ENCODE measurements at regions of chr19 and their contacts with region 1.

Region 1: GRCh38 chr19:29694669-29695627 is 20.1 kb downstream of the C19orf12 start:
- DNase-seq: peak; percentile 91
- ATAC-seq: peak; percentile 96
- H3K4me3 Mint-ChIP-seq: no peak overlapping the region
- H3K27ac Mint-ChIP-seq: peak overlapping the region; percentile 21
- H3K4me1 Mint-ChIP-seq: peaks cover 7% of the 10 kb centered on the region
- H3K27me3 Mint-ChIP-seq: no peaks in the 10 kb centered on the region
- CTCF ChIP-seq: peak; percentile 96

Region 2: GRCh38 chr19:29587518-29587986 is 107.4 kb before region 1 on chr19:
- CTCF ChIA-PET with region 1: no interaction called
- POLR2A ChIA-PET with region 1: no interaction called
- intact Hi-C with region 1: no loop called
- DNase-seq: peak; percentile 85
- ATAC-seq: peak; percentile 99
- H3K4me3 Mint-ChIP-seq: no peak overlapping the region
- H3K27ac Mint-ChIP-seq: peak overlapping the region; percentile 55
- H3K4me1 Mint-ChIP-seq: peaks cover 29% of the 10 kb centered on the region
- H3K27me3 Mint-ChIP-seq: peaks cover 17% of the 10 kb centered on the region
- CTCF ChIP-seq: no peak

Region 3: GRCh38 chr19:29622138-29623070 is 72.5 kb before region 1 on chr19:
- CTCF ChIA-PET with region 1: interaction called, 16 read pairs
- POLR2A ChIA-PET with region 1: no interaction called
- intact Hi-C with region 1: no loop called
- DNase-seq: peak; percentile 64
- ATAC-seq: peak; percentile 57
- H3K4me3 Mint-ChIP-seq: peak overlapping the region; percentile 20
- H3K27ac Mint-ChIP-seq: peak overlapping the region; percentile 83
- H3K4me1 Mint-ChIP-seq: peaks cover 51% of the 10 kb centered on the region
- H3K27me3 Mint-ChIP-seq: no peaks in the 10 kb centered on the region
- CTCF ChIP-seq: no peak

Region 4: GRCh38 chr19:29665215-29665825 is 29.6 kb before region 1 on chr19 and contains the start of gene PLEKHF1:
- CTCF ChIA-PET with region 1: interaction called, 26 read pairs
- POLR2A ChIA-PET with region 1: interaction called, 4 read pairs
- intact Hi-C with region 1: no loop called
- DNase-seq: peak; percentile 87
- ATAC-seq: peak; percentile 79
- H3K4me3 Mint-ChIP-seq: peak within 1 kb of the TSS; percentile 88
- H3K27ac Mint-ChIP-seq: peak within 1 kb of the TSS; percentile 90
- H3K4me1 Mint-ChIP-seq: peaks cover 66% of the 10 kb centered on the region
- H3K27me3 Mint-ChIP-seq: no peaks in the 10 kb centered on the region
- CTCF ChIP-seq: no peak
- total RNA-seq, gene PLEKHF1: 30.4 to 31.7 TPM

Region 5: DNA sequence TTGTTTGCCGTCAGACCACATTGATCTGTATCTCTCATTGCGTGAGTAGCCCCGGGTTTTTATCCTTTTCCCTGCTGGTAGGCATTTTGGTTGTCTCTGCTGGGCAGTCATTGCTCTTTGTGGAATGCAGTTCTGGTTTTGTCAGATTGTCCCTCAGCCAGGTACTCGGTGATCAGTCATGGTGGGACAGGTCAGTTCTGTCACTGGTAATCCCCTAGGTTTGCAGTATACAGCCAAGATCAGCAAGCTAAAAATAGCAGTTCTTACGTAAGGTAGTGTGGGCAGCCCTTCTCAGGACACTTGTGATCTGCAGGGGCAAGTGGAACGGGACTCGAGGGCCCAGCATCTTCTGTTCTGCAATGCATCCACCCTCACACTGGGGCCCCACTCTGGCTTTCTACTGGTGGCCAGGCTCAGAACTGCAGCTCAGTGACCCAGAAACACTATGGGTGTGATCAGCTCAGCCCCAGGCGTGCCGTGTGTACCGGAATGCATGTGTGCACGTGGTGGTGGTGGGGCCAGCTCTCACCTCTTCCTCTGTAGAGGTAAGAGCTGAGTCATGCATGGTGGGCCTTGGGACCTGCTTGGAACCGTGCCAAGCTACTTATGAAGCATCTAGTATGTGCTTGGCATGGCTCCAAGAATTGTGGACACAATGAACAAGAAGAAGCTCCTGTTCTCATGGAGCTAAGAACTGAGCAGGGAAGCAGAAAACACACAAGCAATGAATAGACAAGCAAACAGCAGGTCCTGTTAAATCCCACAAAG is 23.4 kb before region 1 on chr19:
- CTCF ChIA-PET with region 1: interaction called, 26 read pairs
- POLR2A ChIA-PET with region 1: interaction called, 5 read pairs
- intact Hi-C with region 1: no loop called
- DNase-seq: peak; percentile 96
- ATAC-seq: peak; percentile 66
- H3K4me3 Mint-ChIP-seq: peak overlapping the region; percentile 52
- H3K27ac Mint-ChIP-seq: peak overlapping the region; percentile 90
- H3K4me1 Mint-ChIP-seq: peaks cover 89% of the 10 kb centered on the region
- H3K27me3 Mint-ChIP-seq: no peaks in the 10 kb centered on the region
- CTCF ChIP-seq: peak; percentile 77

Region 6: DNA sequence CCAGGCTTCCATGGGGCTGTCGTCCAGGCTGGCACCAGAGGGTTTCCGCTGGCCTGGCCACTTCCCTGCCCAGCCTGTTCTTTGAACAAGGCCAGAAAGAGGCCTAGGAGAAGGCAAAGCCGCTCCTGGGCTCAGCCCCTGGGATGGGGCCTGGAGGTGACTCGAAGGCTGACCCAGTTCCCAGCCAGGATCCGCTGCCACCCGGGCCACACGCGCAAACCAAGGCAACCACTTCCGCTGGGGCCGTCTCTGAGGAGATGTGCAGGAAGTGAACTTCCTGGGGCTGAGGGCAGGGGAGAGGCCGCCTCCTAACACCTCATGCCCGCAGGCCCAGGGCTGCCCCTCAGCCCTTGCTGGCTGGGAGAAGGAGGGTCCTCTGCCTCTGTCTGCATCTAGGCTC is 14.5 kb before region 1 on chr19:
- CTCF ChIA-PET with region 1: interaction called, 17 read pairs
- POLR2A ChIA-PET with region 1: interaction called, 3 read pairs
- intact Hi-C with region 1: no loop called
- DNase-seq: peak; percentile 92
- ATAC-seq: peak; percentile 90
- H3K4me3 Mint-ChIP-seq: peak overlapping the region; percentile 52
- H3K27ac Mint-ChIP-seq: peak overlapping the region; percentile 83
- H3K4me1 Mint-ChIP-seq: peaks cover 72% of the 10 kb centered on the region
- H3K27me3 Mint-ChIP-seq: no peaks in the 10 kb centered on the region
- CTCF ChIP-seq: no peak

Region 7: DNA sequence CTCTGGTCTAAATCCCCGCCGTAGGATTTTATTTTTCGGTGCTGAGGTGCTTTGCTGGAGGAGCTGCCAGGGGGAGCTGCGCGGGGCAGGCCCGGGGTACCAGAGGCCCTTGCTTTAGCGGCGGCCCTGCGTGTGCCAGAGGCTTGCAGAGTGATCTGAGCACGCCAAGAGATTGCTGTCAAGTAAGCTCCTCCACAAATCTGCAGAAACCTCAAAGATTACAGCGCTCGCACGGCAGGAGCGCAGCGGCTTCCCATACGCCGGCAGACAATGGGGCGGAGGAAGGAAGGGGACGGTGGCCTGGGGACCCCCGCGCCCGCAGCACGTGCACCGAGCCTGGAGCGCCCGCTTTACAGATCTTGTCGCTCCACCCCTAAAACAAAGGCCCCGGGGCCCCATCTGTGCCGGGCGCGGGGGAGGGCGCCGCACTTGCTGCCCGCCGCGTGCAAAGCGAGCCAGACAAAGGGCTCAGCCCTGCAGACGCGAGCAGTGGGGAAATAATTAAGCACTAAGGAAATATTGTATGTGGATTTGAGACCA is 29.2 kb after region 1 on chr19:
- CTCF ChIA-PET with region 1: interaction called, 300 read pairs
- POLR2A ChIA-PET with region 1: no interaction called
- intact Hi-C with region 1: no loop called
- DNase-seq: peak; percentile 69
- ATAC-seq: peak; percentile 80
- H3K4me3 Mint-ChIP-seq: peak overlapping the region; percentile 62
- H3K27ac Mint-ChIP-seq: peak overlapping the region; percentile 6
- H3K4me1 Mint-ChIP-seq: peaks cover 15% of the 10 kb centered on the region
- H3K27me3 Mint-ChIP-seq: peaks cover 3% of the 10 kb centered on the region
- CTCF ChIP-seq: no peak